ENCODE measurements at regions of chrX and their contacts with region 1.

Region 1: DNA sequence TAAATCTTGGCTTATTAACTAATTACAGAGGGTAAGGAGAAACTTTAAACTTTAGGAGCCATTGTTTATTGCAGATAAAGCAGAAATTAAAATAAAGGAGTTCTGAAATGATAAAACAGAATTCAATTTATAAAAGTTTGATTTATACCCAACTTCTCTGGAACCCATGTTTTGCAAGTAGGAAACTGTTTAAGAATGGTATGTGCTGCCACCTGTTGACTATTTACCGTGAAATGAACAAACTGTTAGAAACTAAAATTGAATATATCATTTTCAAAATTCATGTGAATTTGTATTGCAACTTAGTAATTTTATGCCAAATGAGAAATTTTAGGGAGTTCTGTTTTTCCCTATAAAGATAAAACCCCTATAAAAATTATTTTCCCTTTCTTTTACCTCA is 11.0 kb upstream of the TBC1D8B start:
- DNase-seq: no peak
- H3K4me3 ChIP-seq: no peak overlapping the region
- H3K4me3 Mint-ChIP-seq: no peak overlapping the region
- H3K27ac Mint-ChIP-seq: no peak overlapping the region
- H3K4me1 ChIP-seq: no peaks in the 10 kb centered on the region
- H3K4me1 Mint-ChIP-seq: no peaks in the 10 kb centered on the region
- H3K27me3 ChIP-seq: no peaks in the 10 kb centered on the region
- H3K27me3 Mint-ChIP-seq: no peaks in the 10 kb centered on the region
- CTCF ChIP-seq: peak in 1 of 2 experiments; percentile 31

Region 2: DNA sequence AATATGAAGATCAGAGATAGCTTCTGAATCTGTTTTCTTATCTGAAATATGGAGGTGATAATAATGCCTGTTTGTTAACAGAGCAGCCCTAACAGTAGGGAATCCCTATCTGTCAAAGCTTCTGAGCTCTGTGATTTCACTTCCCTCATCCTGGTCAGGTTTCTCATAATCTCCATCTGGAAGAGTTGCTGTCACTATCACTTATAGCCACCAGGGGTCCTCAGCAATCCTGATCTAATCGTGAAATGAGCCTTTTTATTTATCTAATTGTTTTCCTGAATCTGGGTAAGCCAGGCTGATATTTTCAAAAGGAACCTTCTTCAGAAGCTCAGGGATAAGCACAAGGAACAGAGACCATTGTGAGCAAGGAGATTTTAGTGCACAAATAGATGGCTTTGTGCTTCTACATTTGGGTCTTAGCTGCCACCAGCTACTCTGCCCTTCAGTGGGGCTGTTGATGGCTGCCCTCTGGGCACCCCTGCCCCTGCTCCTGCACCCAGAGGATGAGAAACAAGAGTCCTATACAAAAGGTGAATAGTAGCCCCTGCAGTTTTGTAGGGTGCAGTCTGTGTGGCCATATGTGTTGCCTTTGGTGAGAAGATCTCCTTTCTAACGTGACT is 376.1 kb before region 1 on chrX:
- CTCF ChIA-PET with region 1: no interaction called
- POLR2A ChIA-PET with region 1: no interaction called
- intact Hi-C with region 1: loop called (anchors 5 kb)
- DNase-seq: peak in 1 of 2 experiments; percentile 9
- H3K4me3 ChIP-seq: no peak overlapping the region
- H3K4me3 Mint-ChIP-seq: no peak overlapping the region
- H3K27ac Mint-ChIP-seq: no peak overlapping the region
- H3K4me1 ChIP-seq: no peaks in the 10 kb centered on the region
- H3K4me1 Mint-ChIP-seq: no peaks in the 10 kb centered on the region
- H3K27me3 ChIP-seq: no peaks in the 10 kb centered on the region
- H3K27me3 Mint-ChIP-seq: peaks cover 10% of the 10 kb centered on the region
- CTCF ChIP-seq: peak; percentile 19 to 53

Region 3: DNA sequence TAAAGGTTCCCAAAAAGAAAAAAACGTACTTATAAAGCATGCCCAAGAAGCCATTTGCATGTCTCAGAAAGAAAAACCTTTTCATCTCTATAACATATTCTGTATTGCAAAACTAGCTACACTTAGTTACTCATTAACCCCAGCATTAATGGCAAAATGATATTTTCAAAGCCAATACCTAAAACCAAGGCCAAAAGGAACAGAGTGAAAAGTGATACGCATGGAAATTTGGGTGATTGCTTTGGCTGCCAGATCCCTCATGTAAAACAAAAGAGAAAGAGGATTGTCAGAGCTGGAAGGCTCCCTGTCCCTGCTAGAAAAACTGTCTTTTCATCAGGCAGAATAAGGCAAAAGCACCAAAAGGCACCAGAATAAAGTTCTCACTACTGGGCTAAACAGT is 226.5 kb before region 1 on chrX:
- CTCF ChIA-PET with region 1: no interaction called
- POLR2A ChIA-PET with region 1: no interaction called
- intact Hi-C with region 1: no loop called
- DNase-seq: no peak
- H3K4me3 ChIP-seq: no peak overlapping the region
- H3K4me3 Mint-ChIP-seq: no peak overlapping the region
- H3K27ac Mint-ChIP-seq: no peak overlapping the region
- H3K4me1 ChIP-seq: no peaks in the 10 kb centered on the region
- H3K4me1 Mint-ChIP-seq: no peaks in the 10 kb centered on the region
- H3K27me3 ChIP-seq: no peaks in the 10 kb centered on the region
- H3K27me3 Mint-ChIP-seq: peaks cover 8% of the 10 kb centered on the region
- CTCF ChIP-seq: no peak

Measured in Caco-2 (cell line).